Panc1 (cell line): ENCODE measurements at regions of chr10 and their contacts with region 1.

Region 1: DNA sequence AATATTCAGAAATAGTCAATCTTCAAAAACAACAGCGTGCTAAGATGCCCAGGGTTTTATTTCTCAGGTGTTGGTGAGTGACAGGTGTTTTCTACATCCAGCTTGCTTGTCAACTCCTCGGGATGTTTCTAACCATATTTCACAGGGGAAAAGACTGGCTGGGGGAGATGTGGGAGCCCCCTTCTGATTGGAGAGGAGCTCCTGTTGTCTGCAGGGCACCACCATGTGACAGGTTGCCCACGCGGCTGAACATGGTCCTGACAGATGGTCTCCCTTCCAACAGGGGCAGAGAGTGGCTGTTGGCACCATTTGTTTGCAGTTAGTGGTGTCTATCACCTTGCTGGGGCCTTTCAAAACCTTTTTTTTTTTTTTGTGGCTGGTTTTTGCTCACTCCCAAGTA is 16.5 kb upstream of the GPR26 start:
- DNase-seq: no peak
- ATAC-seq: no peak
- H3K4me3 ChIP-seq: no peak overlapping the region
- H3K27ac ChIP-seq: no peak overlapping the region
- H3K4me1 ChIP-seq: no peaks in the 10 kb centered on the region
- H3K27me3 ChIP-seq: peaks cover 22% of the 10 kb centered on the region
- CTCF ChIP-seq: no peak

Region 2: GRCh38 chr10:123588386-123588914 is 61.2 kb before region 1 on chr10:
- CTCF ChIA-PET with region 1: no interaction called
- POLR2A ChIA-PET with region 1: interaction called, 10 read pairs
- in situ Hi-C with region 1: no loop called
- intact Hi-C with region 1: no loop called
- DNase-seq: no peak
- ATAC-seq: no peak
- H3K4me3 ChIP-seq: no peak overlapping the region
- H3K27ac ChIP-seq: no peak overlapping the region
- H3K4me1 ChIP-seq: peaks cover 6% of the 10 kb centered on the region
- H3K27me3 ChIP-seq: peaks cover 25% of the 10 kb centered on the region
- CTCF ChIP-seq: no peak